Activated T-helper 1 cell treated with anti-CD3 and anti-CD28 coated beads, Interleukin-12 subunit alpha, Interleukin-12 subunit beta, Interleukin-2, Interleukin-4 antibody, amounts not matched to agents 30 ng/mL and 10 ng/mL and 1 ng/mL, durations not matched to agents 14 hours and 24 hours and 36 hours (primary cell): ENCODE measurements at regions of chr9 and their contacts with region 1.

Region 1: GRCh38 chr9:69919461-69920061 is 98.9 kb downstream of the CFAP95 start:
- DNase-seq: no peak
- H3K4me3 Mint-ChIP-seq: no peak overlapping the region
- H3K27ac Mint-ChIP-seq: no peak overlapping the region
- H3K4me1 Mint-ChIP-seq: no peaks in the 10 kb centered on the region
- H3K27me3 Mint-ChIP-seq: peaks cover 6% of the 10 kb centered on the region

Region 2: GRCh38 chr9:69672596-69673310 is 246.8 kb before region 1 on chr9:
- intact Hi-C with region 1: loop called (anchors 1 kb)
- DNase-seq: peak; percentile 65
- H3K4me3 Mint-ChIP-seq: peak overlapping the region; percentile 83
- H3K27ac Mint-ChIP-seq: peak overlapping the region; percentile 15
- H3K4me1 Mint-ChIP-seq: peaks cover 7% of the 10 kb centered on the region
- H3K27me3 Mint-ChIP-seq: peaks cover 42% of the 10 kb centered on the region

Region 3: DNA sequence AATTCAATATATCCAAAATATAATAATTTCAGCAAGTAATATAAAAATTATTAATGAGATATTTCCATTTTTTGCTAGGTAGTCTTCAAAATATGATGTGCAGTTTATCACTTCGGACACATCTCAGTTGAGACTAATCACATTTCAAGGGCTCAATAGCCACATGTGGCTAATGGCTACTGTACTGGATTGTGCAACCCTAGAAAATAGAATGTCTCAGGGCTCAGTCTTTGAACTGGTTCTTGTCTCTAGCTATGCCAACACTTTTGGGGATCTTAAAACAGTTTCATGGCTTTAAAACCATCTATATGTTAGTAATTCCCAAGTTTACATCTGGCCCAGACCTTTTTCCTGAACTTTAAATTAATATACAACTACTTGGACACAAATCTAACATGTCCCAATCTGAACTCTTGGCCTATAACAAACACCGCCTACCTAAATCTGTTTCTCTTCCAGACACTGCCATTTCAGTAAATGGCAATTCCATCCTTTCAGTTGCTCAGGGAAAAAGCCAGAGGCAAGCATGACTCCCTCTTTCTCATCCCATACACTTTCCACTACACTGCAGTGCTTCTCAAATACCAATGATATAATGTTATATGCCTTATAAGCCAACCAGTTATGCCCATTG is 178.6 kb before region 1 on chr9:
- intact Hi-C with region 1: no loop called
- DNase-seq: no peak
- H3K4me3 Mint-ChIP-seq: no peak overlapping the region
- H3K27ac Mint-ChIP-seq: no peak overlapping the region
- H3K4me1 Mint-ChIP-seq: peaks cover 18% of the 10 kb centered on the region
- H3K27me3 Mint-ChIP-seq: no peaks in the 10 kb centered on the region

Region 4: DNA sequence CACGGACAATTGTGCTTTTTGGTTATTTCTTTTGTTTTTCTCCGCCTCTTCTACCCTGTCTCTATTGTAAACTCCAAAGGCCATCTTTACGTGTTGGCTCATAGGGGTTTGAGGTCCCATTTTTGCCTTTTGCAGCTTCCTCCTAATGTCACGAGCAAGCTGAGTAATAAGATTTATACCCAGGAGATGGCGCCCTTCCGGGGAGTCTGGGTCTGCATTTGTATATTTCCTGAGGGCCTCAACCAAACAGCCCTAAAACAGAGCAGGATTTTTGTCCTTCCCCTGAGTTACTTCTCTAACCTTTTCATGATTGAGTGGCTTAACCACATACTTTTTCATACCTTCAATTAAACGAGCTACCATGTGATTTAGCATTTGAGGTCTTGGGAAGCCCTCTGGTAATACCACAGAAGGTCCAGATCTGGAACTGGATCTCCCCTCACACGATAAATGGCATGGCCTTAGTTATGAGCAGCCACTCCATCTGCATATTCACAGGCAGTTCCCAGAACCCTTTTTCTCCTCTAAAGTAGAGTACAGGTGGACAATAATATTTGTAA is 110.2 kb before region 1 on chr9:
- intact Hi-C with region 1: loop called (anchors 1 kb)
- DNase-seq: no peak
- H3K4me3 Mint-ChIP-seq: no peak overlapping the region
- H3K27ac Mint-ChIP-seq: no peak overlapping the region
- H3K4me1 Mint-ChIP-seq: peaks cover 13% of the 10 kb centered on the region
- H3K27me3 Mint-ChIP-seq: no peaks in the 10 kb centered on the region